Calu3 (cell line): ENCODE measurements at regions of chr3 and their contacts with region 1.

Region 1: GRCh38 chr3:46378426-46378942 is 7.7 kb downstream of the CCR5 start:
- DNase-seq: peak; percentile 76
- H3K4me3 Mint-ChIP-seq: no peak overlapping the region
- H3K27ac Mint-ChIP-seq: no peak overlapping the region
- H3K4me1 Mint-ChIP-seq: peaks cover 2% of the 10 kb centered on the region
- H3K27me3 Mint-ChIP-seq: peaks cover 43% of the 10 kb centered on the region
- CTCF ChIP-seq: peak; percentile 50

Region 2: DNA sequence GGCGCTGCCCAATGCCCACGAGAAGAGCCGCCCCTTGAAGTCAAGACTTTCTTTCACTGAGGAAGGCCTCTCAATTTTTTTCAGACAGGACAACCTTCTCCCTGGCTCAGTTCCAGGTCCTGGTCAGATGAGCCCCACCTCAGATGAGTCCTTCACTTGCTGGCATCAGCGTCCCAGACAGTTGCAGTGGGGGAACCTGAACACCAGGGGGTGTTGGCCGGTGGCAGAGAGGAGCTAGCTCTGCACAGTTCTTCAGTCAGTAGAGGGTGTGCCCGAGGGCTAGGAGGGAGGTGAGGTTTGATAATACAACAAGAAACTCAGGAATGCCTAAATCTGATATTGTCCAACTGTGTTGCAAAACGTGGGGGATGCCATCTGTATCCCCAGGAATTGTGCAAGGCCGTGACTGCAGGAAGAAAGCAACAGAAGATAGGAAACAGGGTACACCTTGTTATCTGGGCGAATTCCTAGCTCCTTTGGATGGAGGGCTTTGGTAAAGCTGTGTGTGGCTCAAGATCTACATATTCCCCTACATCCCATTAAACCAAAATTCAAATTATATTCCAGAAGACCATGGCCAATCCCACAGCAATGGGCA is 101.9 kb before region 1 on chr3:
- CTCF ChIA-PET with region 1: interaction called, 3 read pairs
- intact Hi-C with region 1: loop called (anchors 10 kb)
- DNase-seq: peak; percentile 60
- H3K4me3 Mint-ChIP-seq: no peak overlapping the region
- H3K27ac Mint-ChIP-seq: no peak overlapping the region
- H3K4me1 Mint-ChIP-seq: no peaks in the 10 kb centered on the region
- H3K27me3 Mint-ChIP-seq: peaks cover 55% of the 10 kb centered on the region
- CTCF ChIP-seq: peak; percentile 33

Region 3: DNA sequence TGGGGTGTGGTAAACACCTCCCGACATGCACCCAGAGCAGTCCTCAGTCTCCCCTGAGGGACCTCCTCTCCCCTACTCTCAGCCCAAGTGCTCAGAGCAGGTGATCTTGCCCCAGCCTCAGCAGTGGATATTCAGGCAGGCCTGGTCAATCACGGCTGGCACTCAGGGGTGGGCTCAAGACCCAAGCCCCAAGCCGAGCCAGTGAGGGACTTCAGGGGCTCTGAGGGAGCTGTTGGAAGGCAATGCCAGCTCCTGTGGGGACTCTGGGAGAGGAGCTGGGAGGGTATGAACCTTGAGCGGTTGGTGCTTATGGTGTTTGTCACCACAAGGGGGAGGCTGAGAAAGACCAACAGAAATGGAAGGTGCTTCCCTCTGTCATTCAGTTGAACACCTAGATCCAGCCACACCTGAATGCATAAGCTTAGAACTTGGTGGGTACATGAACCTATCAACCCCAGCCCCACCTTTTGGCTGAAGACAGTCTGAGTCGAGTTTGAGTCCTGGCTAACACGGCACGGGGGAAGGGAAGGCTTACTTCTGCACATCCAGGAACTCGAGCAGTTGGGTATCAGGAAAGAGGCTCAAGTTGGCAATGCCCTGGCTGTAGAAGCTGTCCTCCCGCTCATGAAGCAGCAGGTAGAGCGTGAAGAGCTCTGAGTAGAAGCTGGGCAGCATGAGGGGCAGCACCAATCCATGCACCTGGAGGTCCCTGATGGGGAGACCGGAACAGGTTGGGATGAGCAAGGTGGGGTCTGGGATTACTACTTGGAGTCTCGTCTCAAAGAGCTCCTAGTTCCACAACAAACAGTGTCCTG is 295.8 kb after region 1 on chr3:
- CTCF ChIA-PET with region 1: no interaction called
- intact Hi-C with region 1: no loop called
- DNase-seq: no peak
- H3K4me3 Mint-ChIP-seq: no peak overlapping the region
- H3K27ac Mint-ChIP-seq: no peak overlapping the region
- H3K4me1 Mint-ChIP-seq: no peaks in the 10 kb centered on the region
- H3K27me3 Mint-ChIP-seq: no peaks in the 10 kb centered on the region
- CTCF ChIP-seq: no peak